ENCODE measurements at regions of chr2 and their contacts with region 1.

Region 1: DNA sequence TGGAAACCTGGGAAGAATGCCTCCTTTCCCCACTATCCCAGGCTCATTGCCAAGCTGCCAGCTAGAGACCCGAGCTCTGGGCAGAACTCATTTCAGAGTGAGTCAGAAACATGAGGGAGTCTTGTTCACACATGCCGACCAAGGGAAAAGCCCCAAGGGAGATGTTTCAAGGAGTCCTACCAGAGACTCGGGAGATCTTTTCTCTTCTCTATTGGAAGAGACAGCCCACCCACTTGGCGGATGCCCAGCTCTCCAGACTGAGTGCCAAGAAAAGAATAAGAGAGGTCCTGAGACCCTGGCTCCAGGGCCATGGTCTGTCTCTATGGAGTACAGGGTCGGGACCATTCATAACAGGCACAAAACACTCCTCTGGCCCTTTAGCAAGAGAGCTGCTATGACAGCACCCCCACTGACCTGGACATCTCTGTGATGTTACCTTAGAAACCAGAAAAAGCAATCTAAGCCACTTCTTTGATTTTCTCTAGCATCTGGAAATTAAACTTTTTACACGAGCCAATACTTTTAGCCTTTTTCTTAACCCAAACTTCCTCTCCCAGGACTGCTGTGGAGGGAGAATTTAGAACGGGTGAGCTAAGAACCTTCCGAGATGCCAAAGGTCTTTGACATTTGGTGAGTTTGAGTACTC is 18.5 kb upstream of the IGFBP5 start:
- DNase-seq: peak; percentile 55 to 76 (median 62)
- ATAC-seq: peak in 3 of 4 donors; percentile 63 to 67 (median 66)
- H3K4me3 ChIP-seq: no peak overlapping the region
- H3K27ac ChIP-seq: peak overlapping the region in 7 of 12 donors; percentile 1 to 58 (median 33)
- H3K4me1 ChIP-seq: peaks cover 0 to 47% (median 5%) of the 10 kb centered on the region in 12 donors
- H3K27me3 ChIP-seq: no peaks in the 10 kb centered on the region
- CTCF ChIP-seq: no peak
- POLR2A ChIP-seq: no peak

Region 2: DNA sequence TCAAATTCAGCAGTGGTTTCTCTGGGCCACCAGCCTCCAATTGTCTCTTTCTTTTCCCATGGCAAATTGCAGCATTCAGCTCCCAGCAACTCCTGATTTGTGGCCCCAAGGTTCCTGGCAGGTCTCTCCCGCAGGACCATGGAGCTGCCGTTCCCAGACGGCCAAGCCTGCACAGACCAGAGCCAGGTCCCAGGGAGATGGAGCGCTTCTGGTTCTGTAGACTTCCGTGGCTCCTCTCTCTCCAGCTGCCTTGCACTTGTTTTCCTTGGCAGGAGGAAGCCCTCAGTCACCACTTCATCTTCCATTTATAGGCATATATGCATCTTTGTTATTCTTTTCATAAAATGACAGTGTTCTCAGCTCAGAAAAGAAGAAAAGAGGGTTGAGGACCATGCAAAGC is 124.3 kb after region 1 on chr2:
- intact Hi-C with region 1: loop called in 4 of 10 experiments (anchors 5 to 10 kb)
- DNase-seq: peak; percentile 41 to 75 (median 58)
- ATAC-seq: peak; percentile 59 to 73 (median 67)
- H3K4me3 ChIP-seq: no peak overlapping the region
- H3K27ac ChIP-seq: peak overlapping the region in 6 of 12 donors; percentile 2 to 59 (median 45)
- H3K4me1 ChIP-seq: peaks cover 0 to 31% (median 12%) of the 10 kb centered on the region in 12 donors
- H3K27me3 ChIP-seq: no peaks in the 10 kb centered on the region
- CTCF ChIP-seq: no peak
- POLR2A ChIP-seq: no peak